Adrenal gland (tissue), 19 donors: ENCODE measurements at regions of chr14 and their contacts with region 1.

Region 1: DNA sequence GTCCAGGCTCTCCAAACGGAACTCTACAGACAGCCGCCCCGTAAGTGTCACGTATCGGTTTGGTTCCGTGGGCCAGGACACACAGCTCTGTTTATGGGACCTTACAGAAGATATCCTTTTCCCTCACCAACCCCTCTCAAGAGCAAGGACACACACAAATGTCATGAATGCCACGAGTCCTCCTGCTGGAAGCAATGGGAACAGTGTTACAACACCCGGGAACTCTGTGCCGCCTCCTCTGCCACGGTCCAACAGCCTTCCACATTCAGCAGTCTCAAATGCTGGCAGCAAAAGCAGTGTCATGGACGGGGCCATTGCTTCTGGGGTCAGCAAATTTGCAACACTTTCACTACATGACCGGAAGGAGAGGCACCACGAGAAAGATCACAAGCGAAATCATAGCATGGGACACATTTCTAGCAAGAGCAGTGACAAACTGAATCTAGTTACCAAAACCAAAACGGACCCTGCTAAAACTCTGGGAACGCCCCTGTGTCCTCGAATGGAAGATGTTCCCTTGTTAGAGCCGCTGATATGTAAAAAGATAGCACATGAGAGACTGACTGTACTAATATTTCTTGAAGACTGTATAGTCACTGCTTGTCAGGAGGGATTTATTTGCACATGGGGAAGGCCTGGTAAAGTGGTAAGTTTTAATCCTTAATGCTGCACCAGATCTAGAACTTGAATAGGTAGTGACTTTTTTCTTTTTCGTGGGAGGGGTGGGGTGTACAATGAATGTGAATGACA is 69.7 kb downstream of the WDR20 start:
- DNase-seq: peak; percentile 58 to 92 (median 89)
- H3K4me3 ChIP-seq: no peak overlapping the region
- H3K27ac ChIP-seq: peak overlapping the region in 3 of 5 donors; percentile 43 to 65 (median 62)
- H3K4me1 ChIP-seq: peaks cover 12 to 33% of the 10 kb centered on the region in 2 donors
- H3K27me3 ChIP-seq: no peaks in the 10 kb centered on the region
- CTCF ChIP-seq: peak; percentile 15 to 79 (median 72)
- POLR2A ChIP-seq: peak in 1 of 2 donors; percentile 10

Region 2: DNA sequence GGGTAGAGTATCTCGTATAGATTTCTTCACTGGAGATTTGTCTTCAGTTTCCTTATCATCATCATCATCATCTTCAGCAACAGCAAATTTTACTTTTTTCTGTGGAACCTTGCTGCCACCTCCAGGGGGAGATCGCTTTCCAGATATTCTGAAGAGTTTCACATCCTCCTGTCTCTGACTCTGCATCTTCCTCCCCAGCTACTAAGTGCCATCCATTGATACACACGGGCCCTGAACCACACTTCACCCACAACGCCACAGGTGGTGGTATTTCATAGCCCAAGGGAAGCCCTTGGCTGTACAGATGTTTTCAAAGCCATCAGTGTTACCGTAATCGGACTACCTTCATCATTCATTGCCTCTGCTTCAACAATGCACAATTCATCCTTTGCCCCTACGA is 365.7 kb before region 1 on chr14:
- intact Hi-C with region 1: no loop called
- DNase-seq: no peak
- H3K4me3 ChIP-seq: no peak overlapping the region
- H3K27ac ChIP-seq: no peak overlapping the region
- H3K4me1 ChIP-seq: peaks cover 4 to 9% of the 10 kb centered on the region in 2 donors
- H3K27me3 ChIP-seq: no peaks in the 10 kb centered on the region
- CTCF ChIP-seq: peak in 5 of 6 experiments; percentile 20 to 50 (median 42)
- POLR2A ChIP-seq: no peak

Region 3: DNA sequence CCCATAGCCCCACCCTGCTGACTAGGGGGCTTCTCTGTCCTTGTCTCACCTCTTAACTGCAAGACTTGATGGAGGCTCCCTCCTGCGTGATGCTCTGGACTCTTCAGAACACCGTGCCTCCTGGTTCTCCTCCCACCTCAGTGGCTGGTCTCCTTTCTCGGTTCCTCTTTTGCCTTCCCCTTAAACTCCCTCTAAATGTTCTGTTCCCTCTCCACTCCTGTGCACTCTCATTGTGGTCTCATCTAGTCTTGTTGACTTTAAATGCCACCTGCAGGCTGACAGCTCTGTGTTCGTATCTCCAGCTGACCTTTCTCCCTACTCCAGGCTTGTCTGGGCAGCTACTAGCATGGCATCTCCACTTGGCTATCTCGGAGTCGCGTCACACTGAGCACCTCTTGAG is 216.7 kb before region 1 on chr14:
- intact Hi-C with region 1: no loop called
- DNase-seq: no peak
- H3K4me3 ChIP-seq: no peak overlapping the region
- H3K27ac ChIP-seq: no peak overlapping the region
- H3K4me1 ChIP-seq: no peaks in the 10 kb centered on the region
- H3K27me3 ChIP-seq: no peaks in the 10 kb centered on the region
- CTCF ChIP-seq: no peak
- POLR2A ChIP-seq: no peak

Region 4: DNA sequence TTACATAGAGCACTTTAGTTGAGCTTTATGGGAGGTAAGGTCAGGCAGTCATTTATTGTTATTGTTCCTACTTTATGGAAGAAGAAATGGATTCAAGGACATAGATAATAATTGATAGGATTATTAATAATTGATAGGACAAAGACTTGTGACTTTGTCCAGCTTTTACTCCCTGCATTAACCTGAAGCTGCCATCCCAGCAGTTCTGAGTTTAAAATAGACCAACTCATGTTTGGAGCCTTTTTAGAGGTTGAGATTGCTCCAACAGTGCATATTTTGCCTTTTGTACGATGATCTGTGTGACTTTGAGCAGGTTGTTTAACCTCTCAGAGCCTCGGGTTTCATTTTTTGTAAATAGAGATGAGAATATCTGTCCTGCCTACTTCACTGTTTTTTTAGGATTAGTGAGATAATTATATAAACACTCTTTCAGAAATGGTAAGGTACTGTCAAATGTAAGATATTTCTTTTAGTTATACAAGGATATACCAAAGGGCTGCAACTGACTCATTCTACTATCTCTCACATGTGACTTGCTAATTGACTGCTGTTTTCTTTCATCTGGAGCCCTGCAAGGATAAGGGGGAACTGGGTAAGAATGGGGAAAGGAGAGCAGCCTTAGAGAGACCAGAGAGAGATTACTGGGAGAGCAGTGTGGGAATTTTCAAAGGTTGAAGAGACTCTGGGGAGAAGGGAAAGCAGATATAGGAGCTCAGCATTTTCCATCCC is 54.4 kb before region 1 on chr14:
- intact Hi-C with region 1: loop called (anchors 5 to 10 kb)
- DNase-seq: peak in 1 of 7 donors; percentile 18
- H3K4me3 ChIP-seq: no peak overlapping the region
- H3K27ac ChIP-seq: peak overlapping the region in 3 of 5 donors; percentile 13 to 55 (median 15)
- H3K4me1 ChIP-seq: peaks cover 35 to 59% of the 10 kb centered on the region in 2 donors
- H3K27me3 ChIP-seq: no peaks in the 10 kb centered on the region
- CTCF ChIP-seq: no peak
- POLR2A ChIP-seq: no peak